ENCODE measurements at regions of chr20 and their contacts with region 1.

Region 1: DNA sequence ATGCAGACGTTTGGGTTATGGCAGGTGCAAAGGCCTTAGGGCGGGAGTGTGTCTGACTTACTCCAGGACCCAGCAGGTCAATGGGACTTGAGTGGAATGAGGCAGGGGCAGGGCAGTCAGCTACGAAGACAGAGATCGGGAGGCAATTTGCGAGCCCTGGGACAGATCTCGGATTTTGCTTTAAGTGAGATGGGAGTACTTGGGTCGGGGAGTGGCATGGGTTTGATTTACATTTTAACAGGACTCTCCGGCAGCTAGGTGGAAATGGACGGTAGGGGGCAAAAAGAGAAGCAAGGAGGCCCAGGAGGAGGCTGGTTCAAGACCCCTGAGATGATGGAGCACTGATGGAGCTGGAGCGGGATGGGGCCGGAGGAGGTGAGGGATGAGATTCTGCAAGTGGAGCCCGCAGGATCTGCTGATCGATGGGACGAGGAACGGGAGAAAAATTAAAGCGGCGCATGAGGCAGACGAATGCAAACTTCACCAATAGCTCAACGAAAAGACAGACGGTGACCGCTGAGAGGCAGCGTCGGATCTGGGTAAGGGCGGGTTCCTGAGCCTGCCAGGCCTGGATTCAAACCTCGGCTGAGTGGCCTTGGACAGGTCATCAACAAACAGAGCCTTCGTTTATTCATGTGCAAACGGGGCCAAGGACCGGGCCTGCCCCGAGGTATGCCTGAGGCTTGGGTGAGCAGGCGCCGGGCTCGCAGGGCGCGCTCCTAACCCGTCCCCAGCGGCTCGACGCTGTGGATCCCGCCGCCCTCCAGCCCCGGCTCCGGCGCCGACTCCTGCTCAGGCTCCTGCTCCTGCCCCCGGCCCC is 756 bp upstream of the RBCK1 start:
- DNase-seq: peak in 1 of 2 donors; percentile 83
- ATAC-seq: peak; percentile 49 to 67 (median 58)
- H3K4me3 ChIP-seq: peak overlapping the region; percentile 36
- H3K4me3 Mint-ChIP-seq: peak overlapping the region; percentile 88
- H3K27ac ChIP-seq: peak overlapping the region; percentile 24
- H3K27ac Mint-ChIP-seq: peak overlapping the region; percentile 85 to 90
- H3K4me1 ChIP-seq: peaks cover 26% of the 10 kb centered on the region
- H3K4me1 Mint-ChIP-seq: peaks cover 30 to 36% of the 10 kb centered on the region in 2 donors
- H3K27me3 ChIP-seq: no peaks in the 10 kb centered on the region
- H3K27me3 Mint-ChIP-seq: no peaks in the 10 kb centered on the region
- CTCF ChIP-seq: peak; percentile 43

Region 2: GRCh38 chr20:462199-462991 is 55.1 kb after region 1 on chr20 and contains the start of gene TBC1D20:
- intact Hi-C with region 1: loop called (anchors 1 kb)
- DNase-seq: peak; percentile 85 to 96
- ATAC-seq: peak; percentile 93 to 99 (median 96)
- H3K4me3 ChIP-seq: peak within 1 kb of the TSS; percentile 81
- H3K4me3 Mint-ChIP-seq: peak within 1 kb of the TSS; percentile 97
- H3K27ac ChIP-seq: peak within 1 kb of the TSS; percentile 79
- H3K27ac Mint-ChIP-seq: peak within 1 kb of the TSS; percentile 90 to 92
- H3K4me1 ChIP-seq: peaks cover 18% of the 10 kb centered on the region
- H3K4me1 Mint-ChIP-seq: peaks cover 32 to 45% of the 10 kb centered on the region in 2 donors
- H3K27me3 ChIP-seq: no peaks in the 10 kb centered on the region
- H3K27me3 Mint-ChIP-seq: peaks cover 5 to 8% of the 10 kb centered on the region in 2 donors
- CTCF ChIP-seq: no peak
- total RNA-seq, gene TBC1D20: 32.5 to 47.6 (median 44.2) TPM

Region 3: GRCh38 chr20:478949-479429 is 71.6 kb after region 1 on chr20:
- intact Hi-C with region 1: loop called (anchors 1 kb)
- DNase-seq: peak in 1 of 2 donors; percentile 83
- ATAC-seq: peak; percentile 68 to 84 (median 69)
- H3K4me3 ChIP-seq: no peak overlapping the region
- H3K4me3 Mint-ChIP-seq: no peak overlapping the region
- H3K27ac ChIP-seq: no peak overlapping the region
- H3K27ac Mint-ChIP-seq: peak overlapping the region; percentile 4 to 55
- H3K4me1 ChIP-seq: peaks cover 3% of the 10 kb centered on the region
- H3K4me1 Mint-ChIP-seq: peaks cover 5 to 8% of the 10 kb centered on the region in 2 donors
- H3K27me3 ChIP-seq: no peaks in the 10 kb centered on the region
- H3K27me3 Mint-ChIP-seq: no peaks in the 10 kb centered on the region
- CTCF ChIP-seq: peak; percentile 64

Region 4: DNA sequence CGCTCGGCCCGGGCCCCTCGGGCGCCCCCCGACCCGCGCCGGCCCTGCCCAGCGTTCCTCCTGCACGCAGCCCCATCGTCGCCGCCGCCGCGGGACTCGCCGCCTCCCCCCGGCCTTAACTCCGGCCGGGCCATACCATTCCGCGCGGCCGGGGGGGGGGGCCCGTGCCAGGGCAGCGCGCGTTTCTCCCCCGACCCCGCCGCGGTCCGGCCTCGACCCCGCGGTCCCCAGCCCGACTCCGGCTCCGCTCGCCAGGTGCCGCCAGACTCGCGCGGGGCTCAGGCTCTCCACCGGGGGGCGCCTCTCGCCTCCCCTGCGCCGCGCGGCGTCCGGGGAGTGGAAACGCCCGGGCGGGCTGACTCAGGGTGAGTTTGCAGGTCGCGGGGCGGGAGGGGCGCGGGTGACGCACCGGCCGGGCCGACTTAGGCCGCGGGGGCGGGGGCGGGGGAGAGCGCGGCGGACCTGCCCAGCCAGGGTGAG is 245.8 kb after region 1 on chr20 and contains the start of gene SRXN1:
- intact Hi-C with region 1: no loop called
- DNase-seq: peak; percentile 83 to 85
- ATAC-seq: peak; percentile 93 to 97 (median 94)
- H3K4me3 ChIP-seq: peak within 1 kb of the TSS; percentile 59
- H3K4me3 Mint-ChIP-seq: peak within 1 kb of the TSS; percentile 85
- H3K27ac ChIP-seq: peak within 1 kb of the TSS; percentile 60
- H3K27ac Mint-ChIP-seq: peak within 1 kb of the TSS; percentile 68 to 76
- H3K4me1 ChIP-seq: peaks cover 22% of the 10 kb centered on the region
- H3K4me1 Mint-ChIP-seq: peaks cover 39 to 48% of the 10 kb centered on the region in 2 donors
- H3K27me3 ChIP-seq: no peaks in the 10 kb centered on the region
- H3K27me3 Mint-ChIP-seq: peaks cover 11 to 16% of the 10 kb centered on the region in 2 donors
- CTCF ChIP-seq: peak; percentile 64
- total RNA-seq, gene SRXN1: 9.1 to 16.7 (median 11.6) TPM

Measured in natural killer cell (primary cell).